Caco-2 (cell line): ENCODE measurements at regions of chr1 and their contacts with region 1.

Region 1: GRCh38 chr1:161225534-161226319 is at the start of gene TOMM40L:
- DNase-seq: peak; percentile 94 to 99
- H3K4me3 ChIP-seq: peak within 1 kb of the TSS; percentile 69
- H3K4me3 Mint-ChIP-seq: peak within 1 kb of the TSS; percentile 99
- H3K27ac Mint-ChIP-seq: peak within 1 kb of the TSS; percentile 97
- H3K4me1 ChIP-seq: peaks cover 48% of the 10 kb centered on the region
- H3K4me1 Mint-ChIP-seq: peaks cover 45% of the 10 kb centered on the region
- H3K27me3 ChIP-seq: no peaks in the 10 kb centered on the region
- H3K27me3 Mint-ChIP-seq: no peaks in the 10 kb centered on the region
- CTCF ChIP-seq: peak; percentile 31 to 67
- total RNA-seq, gene TOMM40L: 23.1 and 24.0 TPM in 2 replicates

Region 2: DNA sequence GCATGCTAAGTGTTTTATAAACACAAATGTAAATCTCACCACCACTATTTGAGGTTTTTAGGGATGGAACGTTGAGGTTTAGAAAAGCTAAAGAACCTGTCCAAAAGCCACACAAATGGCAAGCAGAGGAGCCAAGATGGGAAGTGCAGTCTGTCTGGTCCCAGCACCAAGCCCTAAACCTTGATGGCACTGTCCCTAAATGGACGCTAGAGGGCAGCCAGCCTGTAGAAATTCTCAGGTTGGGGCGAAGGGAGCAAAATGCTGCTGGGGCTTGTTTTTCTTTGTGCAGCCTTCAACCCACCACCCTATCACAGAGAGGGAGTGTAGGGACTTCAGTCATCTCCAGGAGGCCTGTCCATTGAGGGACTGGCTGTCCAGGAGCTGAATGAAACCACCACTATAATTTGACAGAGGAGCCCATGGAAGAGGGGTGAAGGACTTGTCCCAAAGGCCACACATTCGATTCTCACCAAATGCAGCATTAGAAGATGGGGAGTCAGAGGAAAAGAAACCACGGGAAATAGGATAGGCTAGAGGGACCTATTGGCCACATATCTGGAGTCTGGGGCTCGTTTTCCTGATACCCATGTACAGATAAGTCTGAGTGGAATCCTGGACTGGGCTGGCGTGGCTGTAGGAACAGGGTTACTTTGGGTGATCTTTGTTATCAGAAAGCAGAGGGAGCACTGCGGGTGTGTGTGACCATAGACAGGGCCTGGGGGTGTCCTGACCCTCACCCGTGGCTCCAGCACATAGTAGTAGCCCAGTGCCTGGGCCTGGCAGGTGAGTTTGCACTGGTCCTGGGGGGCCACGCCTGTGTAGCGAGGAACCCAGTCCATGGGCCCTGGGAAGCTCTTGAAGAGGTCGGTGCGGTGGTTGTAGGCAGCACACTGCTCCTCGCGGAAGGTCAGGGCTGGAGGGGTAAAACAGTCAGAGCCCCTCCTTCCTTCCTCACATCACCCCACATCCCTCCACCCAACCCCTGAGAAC is 33.0 kb before region 1 on chr1:
- CTCF ChIA-PET with region 1: interaction called, 6 read pairs
- POLR2A ChIA-PET with region 1: no interaction called
- intact Hi-C with region 1: loop called (anchors 1 kb)
- DNase-seq: peak; percentile 71 to 76
- H3K4me3 ChIP-seq: no peak overlapping the region
- H3K4me3 Mint-ChIP-seq: no peak overlapping the region
- H3K27ac Mint-ChIP-seq: no peak overlapping the region
- H3K4me1 ChIP-seq: no peaks in the 10 kb centered on the region
- H3K4me1 Mint-ChIP-seq: peaks cover 6% of the 10 kb centered on the region
- H3K27me3 ChIP-seq: no peaks in the 10 kb centered on the region
- H3K27me3 Mint-ChIP-seq: no peaks in the 10 kb centered on the region
- CTCF ChIP-seq: peak; percentile 80 to 94

Region 3: GRCh38 chr1:161209790-161210409 is 15.8 kb before region 1 on chr1:
- CTCF ChIA-PET with region 1: interaction called, 13 read pairs
- POLR2A ChIA-PET with region 1: interaction called, 10 read pairs
- intact Hi-C with region 1: loop called (anchors 1 kb)
- DNase-seq: peak; percentile 89 to 92
- H3K4me3 ChIP-seq: no peak overlapping the region
- H3K4me3 Mint-ChIP-seq: no peak overlapping the region
- H3K27ac Mint-ChIP-seq: peak overlapping the region; percentile 29
- H3K4me1 ChIP-seq: peaks cover 17% of the 10 kb centered on the region
- H3K4me1 Mint-ChIP-seq: peaks cover 30% of the 10 kb centered on the region
- H3K27me3 ChIP-seq: no peaks in the 10 kb centered on the region
- H3K27me3 Mint-ChIP-seq: no peaks in the 10 kb centered on the region
- CTCF ChIP-seq: peak; percentile 93 to 95

Region 4: GRCh38 chr1:161292631-161293030 is 66.9 kb after region 1 on chr1:
- CTCF ChIA-PET with region 1: interaction called, 44 read pairs
- POLR2A ChIA-PET with region 1: interaction called, 3 read pairs
- intact Hi-C with region 1: loop called (anchors 1 kb)
- DNase-seq: no peak
- H3K4me3 ChIP-seq: no peak overlapping the region
- H3K4me3 Mint-ChIP-seq: no peak overlapping the region
- H3K27ac Mint-ChIP-seq: no peak overlapping the region
- H3K4me1 ChIP-seq: peaks cover 14% of the 10 kb centered on the region
- H3K4me1 Mint-ChIP-seq: peaks cover 22% of the 10 kb centered on the region
- H3K27me3 ChIP-seq: no peaks in the 10 kb centered on the region
- H3K27me3 Mint-ChIP-seq: no peaks in the 10 kb centered on the region
- CTCF ChIP-seq: no peak

Region 5: DNA sequence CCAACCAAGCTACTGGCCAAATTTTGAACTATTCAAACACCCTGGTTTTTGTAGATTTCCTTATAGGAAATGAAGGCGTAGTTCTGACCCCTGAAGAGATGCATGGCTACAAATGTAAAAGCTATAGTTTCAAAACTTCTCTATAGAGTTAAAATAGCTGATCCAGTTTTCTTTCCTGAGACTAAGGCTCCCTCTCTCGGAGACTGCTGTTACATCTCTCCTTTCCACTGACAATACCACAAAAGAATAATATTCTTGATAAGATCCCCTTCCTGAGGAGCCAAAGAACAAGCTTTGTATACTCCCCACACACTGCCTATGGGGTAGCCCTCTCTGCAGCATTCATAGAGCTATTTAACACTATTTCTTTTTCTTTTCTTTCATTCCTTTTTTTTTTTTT is 148.6 kb after region 1 on chr1:
- CTCF ChIA-PET with region 1: interaction called, 21 read pairs
- POLR2A ChIA-PET with region 1: interaction called, 3 read pairs
- intact Hi-C with region 1: loop called (anchors 1 kb)
- DNase-seq: peak in 1 of 2 experiments; percentile 14
- H3K4me3 ChIP-seq: no peak overlapping the region
- H3K4me3 Mint-ChIP-seq: no peak overlapping the region
- H3K27ac Mint-ChIP-seq: no peak overlapping the region
- H3K4me1 ChIP-seq: peaks cover 15% of the 10 kb centered on the region; the same call in 1 of the 2 replicates
- H3K4me1 Mint-ChIP-seq: no peaks in the 10 kb centered on the region
- H3K27me3 ChIP-seq: no peaks in the 10 kb centered on the region
- H3K27me3 Mint-ChIP-seq: no peaks in the 10 kb centered on the region
- CTCF ChIP-seq: peak; percentile 19 to 44

Region 6: DNA sequence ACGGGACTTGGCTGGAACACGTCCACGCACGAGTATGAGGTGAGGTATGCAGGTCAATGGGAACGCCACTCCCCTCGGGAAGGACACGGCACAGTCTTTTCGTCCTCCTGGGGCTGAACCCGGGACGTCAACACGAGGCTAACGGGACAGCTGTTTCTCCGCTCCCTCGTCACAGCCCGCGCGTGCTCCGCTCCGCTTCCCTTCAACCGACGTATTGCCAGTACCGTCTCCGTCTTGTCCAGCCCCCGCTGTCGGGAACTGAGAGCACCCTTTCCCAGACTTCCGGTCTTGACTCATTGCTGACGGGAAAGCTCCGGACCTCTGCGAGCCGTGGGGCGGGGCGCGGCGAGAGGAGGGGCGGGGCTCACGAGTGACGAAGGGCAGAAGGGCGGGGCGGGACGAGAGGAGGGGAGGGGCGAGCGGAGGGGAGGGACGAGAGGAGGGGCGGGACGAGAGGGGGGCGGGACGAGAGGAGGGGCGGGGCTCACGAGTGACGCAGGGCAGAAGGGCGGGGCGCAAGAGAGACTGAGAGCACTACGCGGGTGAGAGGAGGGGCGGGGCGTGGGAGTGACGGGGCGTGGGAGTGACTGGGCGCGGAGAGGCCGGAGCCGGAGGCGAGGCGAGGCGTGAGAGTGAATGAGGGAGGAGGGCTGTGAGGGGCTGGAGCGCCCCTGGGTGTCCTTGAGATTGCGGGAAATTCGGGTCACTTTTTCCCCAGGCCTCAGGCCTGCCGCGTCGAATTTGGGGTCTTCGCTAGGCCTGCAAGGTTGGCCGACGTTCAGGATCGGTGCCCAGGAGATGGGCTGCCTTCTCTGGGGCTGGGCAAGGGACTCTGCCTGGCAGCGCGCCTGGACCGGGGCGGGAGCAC is 164.2 kb after region 1 on chr1:
- CTCF ChIA-PET with region 1: interaction called, 6 read pairs
- POLR2A ChIA-PET with region 1: interaction called, 16 read pairs
- intact Hi-C with region 1: no loop called
- DNase-seq: peak; percentile 96 to 97
- H3K4me3 ChIP-seq: peak overlapping the region; percentile 97
- H3K4me3 Mint-ChIP-seq: peak overlapping the region; percentile 97
- H3K27ac Mint-ChIP-seq: peak overlapping the region; percentile 96
- H3K4me1 ChIP-seq: peaks cover 4% of the 10 kb centered on the region; the same call in 1 of the 2 replicates
- H3K4me1 Mint-ChIP-seq: peaks cover 8% of the 10 kb centered on the region
- H3K27me3 ChIP-seq: no peaks in the 10 kb centered on the region
- H3K27me3 Mint-ChIP-seq: no peaks in the 10 kb centered on the region
- CTCF ChIP-seq: no peak